ENCODE measurements at regions of chr10 and their contacts with region 1.

Region 1: GRCh38 chr10:5629303-5630111 is 36.9 kb downstream of the ASB13 start:
- DNase-seq: peak; percentile 91
- H3K4me3 Mint-ChIP-seq: peak overlapping the region; percentile 14
- H3K27ac Mint-ChIP-seq: peak overlapping the region; percentile 69
- H3K4me1 Mint-ChIP-seq: peaks cover 31% of the 10 kb centered on the region
- H3K27me3 Mint-ChIP-seq: peaks cover 3% of the 10 kb centered on the region

Region 2: GRCh38 chr10:5548527-5549223 is 80.8 kb before region 1 on chr10:
- CTCF ChIA-PET with region 1: interaction called, 4 read pairs
- POLR2A ChIA-PET with region 1: no interaction called
- intact Hi-C with region 1: loop called (anchors 5 kb)
- DNase-seq: peak; percentile 78
- H3K4me3 Mint-ChIP-seq: no peak overlapping the region
- H3K27ac Mint-ChIP-seq: no peak overlapping the region
- H3K4me1 Mint-ChIP-seq: peaks cover 27% of the 10 kb centered on the region
- H3K27me3 Mint-ChIP-seq: no peaks in the 10 kb centered on the region

Region 3: DNA sequence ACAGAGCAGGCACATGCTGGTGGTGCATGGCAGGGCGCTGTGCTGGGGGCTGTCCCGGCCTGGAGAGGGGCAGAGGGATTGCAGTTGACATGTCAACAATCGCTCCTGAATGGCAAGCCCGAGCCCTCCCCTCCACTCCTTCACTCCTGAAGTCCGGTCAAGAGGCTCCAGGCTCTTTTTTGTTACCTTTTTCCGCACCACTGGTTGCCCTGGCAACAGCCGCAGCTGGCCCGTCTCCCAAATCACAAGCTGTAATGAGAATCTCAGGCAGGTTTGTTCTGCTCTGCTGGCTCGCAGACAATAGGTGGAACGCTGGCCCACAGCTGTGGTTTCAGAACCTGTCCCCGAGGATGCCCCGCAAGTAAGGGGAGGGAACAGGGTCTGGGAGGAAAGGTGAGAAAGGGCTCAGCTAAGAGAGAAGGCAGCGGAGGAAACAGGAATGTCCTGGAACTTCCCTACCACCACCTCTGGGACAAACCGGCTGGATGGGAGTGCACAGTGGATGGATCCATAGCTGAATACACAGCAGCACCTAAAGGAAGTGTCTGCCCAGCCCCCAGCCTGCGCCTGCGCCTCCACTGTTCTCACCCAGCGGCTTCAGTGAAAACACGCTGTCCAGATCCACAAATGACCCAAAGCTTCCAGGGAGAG is 45.9 kb before region 1 on chr10:
- CTCF ChIA-PET with region 1: no interaction called
- POLR2A ChIA-PET with region 1: no interaction called
- intact Hi-C with region 1: no loop called
- DNase-seq: no peak
- H3K4me3 Mint-ChIP-seq: no peak overlapping the region
- H3K27ac Mint-ChIP-seq: no peak overlapping the region
- H3K4me1 Mint-ChIP-seq: peaks cover under 1% of the 10 kb centered on the region
- H3K27me3 Mint-ChIP-seq: peaks cover under 1% of the 10 kb centered on the region

Region 4: GRCh38 chr10:5643346-5644067 is 14.0 kb after region 1 on chr10:
- CTCF ChIA-PET with region 1: interaction called, 11 read pairs
- POLR2A ChIA-PET with region 1: no interaction called
- intact Hi-C with region 1: no loop called
- DNase-seq: no peak
- H3K4me3 Mint-ChIP-seq: no peak overlapping the region
- H3K27ac Mint-ChIP-seq: no peak overlapping the region
- H3K4me1 Mint-ChIP-seq: no peaks in the 10 kb centered on the region
- H3K27me3 Mint-ChIP-seq: no peaks in the 10 kb centered on the region

Region 5: GRCh38 chr10:5666008-5666829 is 36.7 kb after region 1 on chr10 and contains the start of gene ASB13:
- CTCF ChIA-PET with region 1: interaction called, 7 read pairs
- POLR2A ChIA-PET with region 1: no interaction called
- intact Hi-C with region 1: loop called (anchors 2 kb)
- DNase-seq: peak; percentile 60
- H3K4me3 Mint-ChIP-seq: peak within 1 kb of the TSS; percentile 84
- H3K27ac Mint-ChIP-seq: peak within 1 kb of the TSS; percentile 57
- H3K4me1 Mint-ChIP-seq: peaks cover 18% of the 10 kb centered on the region
- H3K27me3 Mint-ChIP-seq: no peaks in the 10 kb centered on the region
- total RNA-seq, gene ASB13: 12.1 to 12.5 TPM

Region 6: GRCh38 chr10:5873515-5873995 is 244.0 kb after region 1 on chr10:
- CTCF ChIA-PET with region 1: interaction called, 4 read pairs
- POLR2A ChIA-PET with region 1: no interaction called
- intact Hi-C with region 1: loop called (anchors 2 kb)
- DNase-seq: peak; percentile 81
- H3K4me3 Mint-ChIP-seq: no peak overlapping the region
- H3K27ac Mint-ChIP-seq: no peak overlapping the region
- H3K4me1 Mint-ChIP-seq: peaks cover 2% of the 10 kb centered on the region
- H3K27me3 Mint-ChIP-seq: no peaks in the 10 kb centered on the region

Measured in activated CD4-positive, alpha-beta memory T cell treated with anti-CD3 and anti-CD28 coated beads for 36 hours (primary cell).